CD4-positive, alpha-beta memory T cell (primary cell): ENCODE measurements at regions of chr14 and their contacts with region 1.

Region 1: GRCh38 chr14:68283378-68284123 is 464.0 kb downstream of the RAD51B start:
- DNase-seq: peak; percentile 47 to 77 (median 68)
- H3K4me3 ChIP-seq: peak overlapping the region in 1 of 2 donors; percentile 1
- H3K4me3 Mint-ChIP-seq: peak overlapping the region in 7 of 8 donors; percentile 44 to 81 (median 75)
- H3K27ac ChIP-seq: peak overlapping the region; percentile 73
- H3K27ac Mint-ChIP-seq: peak overlapping the region; percentile 94 to 99 (median 95)
- H3K4me1 ChIP-seq: peaks cover 74% of the 10 kb centered on the region
- H3K4me1 Mint-ChIP-seq: peaks cover 60 to 90% (median 73%) of the 10 kb centered on the region in 4 donors
- H3K27me3 ChIP-seq: no peaks in the 10 kb centered on the region
- H3K27me3 Mint-ChIP-seq: no peaks in the 10 kb centered on the region

Region 2: DNA sequence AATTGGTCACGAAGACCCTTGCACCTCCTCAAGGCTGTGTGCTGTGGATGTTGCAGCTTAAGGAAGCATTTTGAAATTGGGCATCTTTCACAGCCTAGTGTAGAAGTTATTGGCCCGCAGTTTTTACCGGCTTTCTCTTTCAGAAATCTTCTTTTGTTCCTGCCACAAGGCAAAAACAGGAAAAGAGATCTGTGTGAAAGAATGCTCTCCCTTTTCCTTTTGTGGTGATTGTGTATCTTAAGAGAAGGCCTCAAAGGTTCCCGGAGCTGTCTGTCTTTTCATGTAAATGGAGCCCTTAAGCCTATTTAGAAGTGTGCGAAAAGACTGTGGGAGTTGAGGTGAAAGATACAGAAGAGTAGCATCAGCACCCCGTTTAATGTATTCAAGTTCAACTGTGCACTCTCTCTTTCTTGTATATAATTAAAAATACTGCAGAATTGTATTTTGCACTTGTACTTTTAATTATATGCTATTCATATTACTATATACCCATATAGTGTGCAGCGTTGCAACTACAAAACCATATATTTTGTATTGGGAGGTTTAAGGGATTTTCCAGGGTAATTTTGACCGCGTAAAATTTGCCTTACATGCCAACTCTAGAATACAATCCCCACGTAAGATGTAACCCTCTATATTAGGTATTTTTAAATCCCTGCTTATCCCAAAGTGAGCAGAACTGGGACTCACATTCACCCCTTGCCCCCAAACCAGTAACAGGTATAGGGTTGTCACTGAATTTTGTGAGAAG is 22.3 kb before region 1 on chr14:
- CTCF ChIA-PET with region 1: interaction called, 4 read pairs
- POLR2A ChIA-PET with region 1: interaction called, 15 read pairs
- intact Hi-C with region 1: loop called (anchors 2 kb)
- DNase-seq: no peak
- H3K4me3 ChIP-seq: peak overlapping the region in 1 of 2 donors; percentile 10
- H3K4me3 Mint-ChIP-seq: peak overlapping the region; percentile 46 to 82 (median 64)
- H3K27ac ChIP-seq: peak overlapping the region; percentile 37
- H3K27ac Mint-ChIP-seq: peak overlapping the region; percentile 87 to 96 (median 93)
- H3K4me1 ChIP-seq: peaks cover 49% of the 10 kb centered on the region
- H3K4me1 Mint-ChIP-seq: peaks cover 26 to 57% (median 46%) of the 10 kb centered on the region in 4 donors
- H3K27me3 ChIP-seq: no peaks in the 10 kb centered on the region
- H3K27me3 Mint-ChIP-seq: no peaks in the 10 kb centered on the region

Region 3: DNA sequence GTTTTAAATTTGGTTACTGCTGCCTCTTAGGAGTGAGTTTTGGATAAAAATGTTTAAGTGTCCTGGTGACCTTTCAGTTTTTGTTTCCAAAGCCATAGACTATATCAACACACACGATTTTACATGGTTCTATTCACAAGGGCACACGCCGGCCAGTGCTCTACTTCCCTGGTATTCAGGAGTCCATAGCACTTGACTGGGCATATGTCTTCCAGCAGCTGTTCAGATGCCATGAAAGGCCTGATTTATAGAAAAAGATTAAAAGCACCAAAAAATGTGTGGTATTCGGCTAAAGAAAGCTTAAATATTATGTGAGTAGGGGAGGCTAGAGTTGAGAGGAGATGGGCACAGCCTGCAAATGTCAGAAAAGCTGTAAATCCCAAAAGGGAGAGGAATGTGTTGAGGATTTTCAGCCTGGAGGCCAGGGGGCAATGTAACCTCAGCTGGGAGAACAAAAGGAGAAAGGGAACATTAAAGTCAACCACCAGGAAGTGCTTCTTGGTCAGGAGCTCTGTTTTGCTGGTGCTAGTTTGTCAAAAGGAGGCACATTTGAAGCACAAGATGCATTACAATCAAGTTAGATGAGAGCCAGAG is 14.4 kb after region 1 on chr14:
- CTCF ChIA-PET with region 1: interaction called, 11 read pairs
- POLR2A ChIA-PET with region 1: interaction called, 25 read pairs
- intact Hi-C with region 1: no loop called
- DNase-seq: no peak
- H3K4me3 ChIP-seq: no peak overlapping the region
- H3K4me3 Mint-ChIP-seq: no peak overlapping the region
- H3K27ac ChIP-seq: no peak overlapping the region
- H3K27ac Mint-ChIP-seq: peak overlapping the region in 5 of 7 donors; percentile 13 to 81 (median 37)
- H3K4me1 ChIP-seq: peaks cover 27% of the 10 kb centered on the region
- H3K4me1 Mint-ChIP-seq: peaks cover 20 to 32% (median 23%) of the 10 kb centered on the region in 4 donors
- H3K27me3 ChIP-seq: no peaks in the 10 kb centered on the region
- H3K27me3 Mint-ChIP-seq: no peaks in the 10 kb centered on the region

Region 4: DNA sequence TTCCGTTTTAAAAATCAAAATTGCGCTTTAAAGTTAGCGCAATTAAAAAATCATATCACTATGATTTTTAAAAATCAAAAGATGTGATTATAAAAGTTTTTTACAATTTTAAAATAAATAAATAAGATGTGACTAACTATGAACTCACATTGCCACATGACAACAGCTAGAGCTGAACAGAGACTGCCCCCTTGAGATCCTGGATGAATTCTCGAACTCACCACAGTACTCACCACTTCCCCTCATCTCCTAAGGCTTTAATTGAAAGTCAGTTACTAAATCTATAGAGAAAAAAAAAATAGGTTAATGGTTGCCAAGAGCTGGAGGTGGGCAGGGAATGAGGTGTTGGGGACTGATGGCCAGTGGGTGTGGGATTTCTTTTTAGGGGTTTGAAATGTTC is 125.1 kb after region 1 on chr14:
- CTCF ChIA-PET with region 1: interaction called, 12 read pairs
- POLR2A ChIA-PET with region 1: interaction called, 8 read pairs
- intact Hi-C with region 1: no loop called
- DNase-seq: peak in 4 of 5 donors; percentile 7 to 28 (median 18)
- H3K4me3 ChIP-seq: no peak overlapping the region
- H3K4me3 Mint-ChIP-seq: peak overlapping the region in 2 of 8 donors; percentile 9 to 14
- H3K27ac ChIP-seq: no peak overlapping the region
- H3K27ac Mint-ChIP-seq: peak overlapping the region in 1 of 7 donors; percentile 10
- H3K4me1 ChIP-seq: peaks cover 26% of the 10 kb centered on the region
- H3K4me1 Mint-ChIP-seq: peaks cover 27 to 39% (median 31%) of the 10 kb centered on the region in 4 donors
- H3K27me3 ChIP-seq: no peaks in the 10 kb centered on the region
- H3K27me3 Mint-ChIP-seq: no peaks in the 10 kb centered on the region

Region 5: DNA sequence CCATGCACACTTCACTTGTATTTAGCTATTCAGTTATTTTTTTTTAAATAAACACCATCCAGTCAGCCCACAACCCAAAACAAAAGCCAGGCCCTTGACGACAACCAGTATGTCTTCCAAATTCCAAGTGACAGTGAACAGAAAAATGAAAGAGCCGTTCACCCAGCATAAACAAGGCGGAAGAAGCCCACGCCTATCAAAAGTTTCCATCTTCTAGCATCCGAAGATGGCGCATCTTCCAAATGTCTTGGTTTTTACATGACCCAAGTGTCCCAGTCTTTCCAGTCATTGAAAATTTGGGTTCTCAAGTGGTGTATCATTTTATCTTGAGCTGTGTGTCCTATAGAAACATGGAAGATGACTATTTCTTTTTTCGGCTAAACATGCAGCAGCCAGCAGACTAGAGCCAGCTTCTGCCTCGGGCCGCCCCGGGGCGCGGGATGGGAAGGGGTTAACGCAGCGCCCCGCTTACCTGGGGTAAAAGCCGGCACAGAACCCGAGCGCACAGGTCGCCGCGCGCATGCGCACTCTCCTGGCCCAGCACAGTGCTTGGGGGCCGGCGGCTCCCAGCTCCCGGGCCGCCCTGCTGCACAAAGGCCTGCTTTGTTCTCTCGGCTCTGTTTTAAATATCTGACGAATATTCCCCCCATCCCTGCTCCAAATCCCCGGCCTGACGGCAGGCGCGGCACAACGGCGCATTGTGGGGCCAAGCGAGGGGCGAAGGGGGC is 344.5 kb after region 1 on chr14:
- CTCF ChIA-PET with region 1: no interaction called
- POLR2A ChIA-PET with region 1: interaction called, 4 read pairs
- intact Hi-C with region 1: loop called (anchors 1 kb)
- DNase-seq: peak; percentile 34 to 60 (median 47)
- H3K4me3 ChIP-seq: peak overlapping the region in 1 of 2 donors; percentile 41
- H3K4me3 Mint-ChIP-seq: peak overlapping the region; percentile 74 to 88 (median 85)
- H3K27ac ChIP-seq: no peak overlapping the region
- H3K27ac Mint-ChIP-seq: peak overlapping the region; percentile 70 to 94 (median 81)
- H3K4me1 ChIP-seq: peaks cover 10% of the 10 kb centered on the region
- H3K4me1 Mint-ChIP-seq: peaks cover 8 to 25% (median 13%) of the 10 kb centered on the region in 4 donors
- H3K27me3 ChIP-seq: no peaks in the 10 kb centered on the region
- H3K27me3 Mint-ChIP-seq: no peaks in the 10 kb centered on the region

Region 6: DNA sequence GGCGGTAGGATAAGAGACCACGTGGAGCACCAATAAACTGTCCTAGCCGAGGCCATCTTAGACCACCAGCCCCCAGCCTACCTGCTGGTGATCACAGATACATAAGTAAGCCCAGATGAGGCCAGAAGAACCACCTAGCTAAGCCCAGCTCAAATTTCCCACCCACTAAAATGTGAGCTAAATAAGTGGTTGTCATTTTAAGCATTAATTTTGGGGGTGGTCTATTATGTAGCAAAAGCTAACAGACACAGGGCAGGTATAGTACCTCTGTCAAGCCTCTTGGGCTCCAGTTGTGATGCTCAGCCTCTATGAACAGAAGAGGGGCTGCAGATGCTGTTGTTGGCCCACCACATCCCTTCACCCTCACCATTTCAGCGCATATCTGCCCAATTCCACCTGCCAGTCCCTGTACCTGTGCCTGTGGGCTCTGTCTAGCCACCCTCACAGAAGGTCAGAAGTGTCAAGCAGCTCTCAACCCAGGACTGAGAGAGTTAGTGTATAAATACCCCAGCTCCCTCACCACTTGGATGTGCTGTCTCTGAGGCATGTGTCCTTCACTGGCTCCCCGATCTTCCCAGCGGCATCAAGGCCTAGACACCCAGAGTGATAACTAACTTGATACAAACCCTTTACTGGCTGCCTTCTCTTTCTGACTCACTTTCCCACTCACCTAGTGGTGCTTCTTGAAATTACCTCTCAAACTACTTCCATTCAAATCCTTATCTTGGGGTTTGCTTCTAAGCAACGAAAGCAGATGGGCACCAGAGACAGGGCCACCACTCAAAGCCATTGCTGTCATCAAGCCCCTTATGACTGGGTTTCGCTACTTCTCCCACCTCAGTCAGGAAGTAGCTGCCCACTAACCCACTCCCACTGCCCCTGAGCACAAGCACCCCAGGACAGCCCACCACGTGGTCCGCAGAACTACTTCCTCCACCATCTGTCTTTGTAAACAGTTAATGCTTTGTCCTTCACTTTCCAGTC is 491.9 kb after region 1 on chr14:
- CTCF ChIA-PET with region 1: interaction called, 7 read pairs
- POLR2A ChIA-PET with region 1: interaction called, 72 read pairs
- intact Hi-C with region 1: no loop called
- DNase-seq: no peak
- H3K4me3 ChIP-seq: no peak overlapping the region
- H3K4me3 Mint-ChIP-seq: peak overlapping the region in 2 of 8 donors; percentile 11 to 20
- H3K27ac ChIP-seq: no peak overlapping the region
- H3K27ac Mint-ChIP-seq: peak overlapping the region in 5 of 7 donors; percentile 29 to 84 (median 57)
- H3K4me1 ChIP-seq: peaks cover 90% of the 10 kb centered on the region
- H3K4me1 Mint-ChIP-seq: peaks cover 62 to 98% (median 77%) of the 10 kb centered on the region in 4 donors
- H3K27me3 ChIP-seq: no peaks in the 10 kb centered on the region
- H3K27me3 Mint-ChIP-seq: no peaks in the 10 kb centered on the region